Heart left ventricle (tissue), 16 donors: ENCODE measurements at regions of chr13 and their contacts with region 1.

Region 1: GRCh38 chr13:100235311-100235901 is 146.5 kb downstream of the PCCA start:
- DNase-seq: no peak
- ATAC-seq: no peak
- H3K4me3 ChIP-seq: peak overlapping the region in 1 of 12 donors; percentile 29
- H3K27ac ChIP-seq: no peak overlapping the region
- H3K4me1 ChIP-seq: peaks cover 0 to 25% (median 14%) of the 10 kb centered on the region in 12 donors
- H3K27me3 ChIP-seq: no peaks in the 10 kb centered on the region
- CTCF ChIP-seq: peak; percentile 33 to 74 (median 56)
- POLR2A ChIP-seq: no peak

Region 2: DNA sequence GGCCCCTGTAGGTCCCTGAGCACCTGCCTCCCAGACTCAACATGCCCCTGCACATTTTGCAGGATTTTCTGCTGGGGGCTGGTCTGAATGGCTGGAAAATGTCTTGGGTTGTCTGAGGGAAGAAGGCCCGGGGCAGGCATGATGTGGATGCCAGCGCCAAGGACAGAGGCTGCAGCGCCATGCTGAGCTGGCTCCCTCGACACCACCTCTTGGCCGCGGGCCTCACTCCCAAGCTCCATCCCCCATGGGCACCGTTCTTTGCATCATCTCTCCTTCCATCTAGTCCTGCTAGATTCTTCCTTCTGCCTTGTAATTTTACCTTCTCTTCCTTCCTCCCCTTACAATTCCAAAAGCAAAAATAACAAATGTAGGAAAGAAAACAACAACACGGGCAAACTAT is 334.4 kb before region 1 on chr13:
- intact Hi-C with region 1: loop called in 1 of 10 experiments (anchors 5 kb)
- DNase-seq: no peak
- ATAC-seq: no peak
- H3K4me3 ChIP-seq: no peak overlapping the region
- H3K27ac ChIP-seq: no peak overlapping the region
- H3K4me1 ChIP-seq: peaks cover 0 to 4% (median 0%) of the 10 kb centered on the region in 12 donors
- H3K27me3 ChIP-seq: peaks cover 6 to 88% (median 36%) of the 10 kb centered on the region in 9 donors
- CTCF ChIP-seq: no peak
- POLR2A ChIP-seq: no peak

Region 3: DNA sequence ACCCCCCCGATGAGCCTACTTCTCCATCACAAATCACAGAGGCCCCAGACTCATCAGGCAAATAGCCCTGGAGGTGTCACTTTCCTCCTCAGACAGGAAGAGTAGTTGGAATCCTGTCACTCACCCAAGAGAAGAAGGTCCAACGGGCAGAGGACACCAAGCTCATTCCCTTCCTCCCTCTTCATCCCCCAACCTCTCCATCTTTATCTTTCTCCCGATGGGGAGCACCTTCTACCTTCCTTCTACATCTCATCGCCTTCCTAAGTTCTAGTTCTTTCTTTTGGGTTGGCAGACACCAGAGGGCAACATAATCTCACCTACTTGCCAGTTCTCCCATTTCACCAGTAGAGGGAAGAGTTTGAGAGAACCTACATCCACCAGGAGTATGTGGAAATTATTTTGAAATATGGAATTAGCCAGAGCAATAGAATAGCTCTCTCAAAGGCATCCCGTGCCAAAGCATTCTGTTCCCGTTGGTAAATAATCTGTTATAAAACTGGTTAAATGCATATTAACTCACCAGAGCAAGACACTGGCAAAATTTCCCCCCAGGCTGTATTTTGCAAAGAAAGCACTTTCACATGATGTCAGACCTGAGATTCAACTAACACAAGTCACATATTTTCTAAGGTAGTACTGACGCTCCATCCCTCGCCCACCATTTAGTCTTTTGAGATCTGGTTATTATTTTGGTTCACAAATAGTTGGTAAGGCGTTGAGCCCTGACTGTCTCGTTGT is 318.9 kb before region 1 on chr13:
- intact Hi-C with region 1: loop called (anchors 2 to 5 kb)
- DNase-seq: no peak
- ATAC-seq: peak in 3 of 4 donors; percentile 67 to 76 (median 69)
- H3K4me3 ChIP-seq: no peak overlapping the region
- H3K27ac ChIP-seq: no peak overlapping the region
- H3K4me1 ChIP-seq: no peaks in the 10 kb centered on the region
- H3K27me3 ChIP-seq: peaks cover 0 to 46% (median 8%) of the 10 kb centered on the region in 9 donors
- CTCF ChIP-seq: peak; percentile 61 to 88 (median 78)
- POLR2A ChIP-seq: no peak

Region 4: GRCh38 chr13:100301418-100301817 is 66.0 kb after region 1 on chr13:
- intact Hi-C with region 1: no loop called
- DNase-seq: no peak
- ATAC-seq: no peak
- H3K4me3 ChIP-seq: no peak overlapping the region
- H3K27ac ChIP-seq: no peak overlapping the region
- H3K4me1 ChIP-seq: peaks cover 0 to 6% (median 0%) of the 10 kb centered on the region in 12 donors
- H3K27me3 ChIP-seq: no peaks in the 10 kb centered on the region
- CTCF ChIP-seq: no peak
- POLR2A ChIP-seq: no peak